H1 (cell line): ENCODE measurements at regions of chr13 and their contacts with region 1.

Region 1: GRCh38 chr13:101457176-101457575 is 4.7 kb downstream of the ITGBL1 start:
- DNase-seq: no peak
- H3K4me3 ChIP-seq: no peak overlapping the region
- H3K27ac ChIP-seq: no peak overlapping the region
- H3K4me1 ChIP-seq: no peaks in the 10 kb centered on the region
- H3K27me3 ChIP-seq: no peaks in the 10 kb centered on the region
- CTCF ChIP-seq: no peak
- EP300 ChIP-seq: no peak
- POLR2A ChIP-seq: no peak
- RAD21 ChIP-seq: no peak

Region 2: GRCh38 chr13:101139081-101139480 is 318.1 kb before region 1 on chr13:
- CTCF ChIA-PET with region 1: no interaction called
- POLR2A ChIA-PET with region 1: no interaction called
- DNase-seq: no peak
- H3K4me3 ChIP-seq: no peak overlapping the region
- H3K27ac ChIP-seq: no peak overlapping the region
- H3K4me1 ChIP-seq: no peaks in the 10 kb centered on the region; a peak in 2 of 7 replicates
- H3K27me3 ChIP-seq: no peaks in the 10 kb centered on the region
- CTCF ChIP-seq: no peak
- EP300 ChIP-seq: no peak
- POLR2A ChIP-seq: no peak
- RAD21 ChIP-seq: no peak

Region 3: GRCh38 chr13:101474419-101474957 is 17.3 kb after region 1 on chr13:
- CTCF ChIA-PET with region 1: interaction called, 10 read pairs
- POLR2A ChIA-PET with region 1: no interaction called
- DNase-seq: peak in 1 of 2 experiments; percentile 61
- H3K4me3 ChIP-seq: no peak overlapping the region
- H3K27ac ChIP-seq: peak overlapping the region; percentile 16; the same call in 1 of the 2 replicates
- H3K4me1 ChIP-seq: peaks cover 0 to 4% (median 0%) of the 10 kb centered on the region in 4 experiments; a peak in 4 of 7 replicates
- H3K27me3 ChIP-seq: no peaks in the 10 kb centered on the region
- CTCF ChIP-seq: peak in 2 of 3 experiments; percentile 74 to 78; a peak in 3 of 4 replicates
- EP300 ChIP-seq: no peak
- POLR2A ChIP-seq: no peak
- RAD21 ChIP-seq: peak; percentile 95 to 96

Region 4: GRCh38 chr13:101529422-101529821 is 72.2 kb after region 1 on chr13:
- CTCF ChIA-PET with region 1: no interaction called
- POLR2A ChIA-PET with region 1: no interaction called
- DNase-seq: no peak
- H3K4me3 ChIP-seq: no peak overlapping the region
- H3K27ac ChIP-seq: no peak overlapping the region
- H3K4me1 ChIP-seq: no peaks in the 10 kb centered on the region
- H3K27me3 ChIP-seq: no peaks in the 10 kb centered on the region
- CTCF ChIP-seq: no peak
- EP300 ChIP-seq: no peak
- POLR2A ChIP-seq: no peak
- RAD21 ChIP-seq: no peak